ENCODE measurements at regions of chr1 and their contacts with region 1.

Region 1: DNA sequence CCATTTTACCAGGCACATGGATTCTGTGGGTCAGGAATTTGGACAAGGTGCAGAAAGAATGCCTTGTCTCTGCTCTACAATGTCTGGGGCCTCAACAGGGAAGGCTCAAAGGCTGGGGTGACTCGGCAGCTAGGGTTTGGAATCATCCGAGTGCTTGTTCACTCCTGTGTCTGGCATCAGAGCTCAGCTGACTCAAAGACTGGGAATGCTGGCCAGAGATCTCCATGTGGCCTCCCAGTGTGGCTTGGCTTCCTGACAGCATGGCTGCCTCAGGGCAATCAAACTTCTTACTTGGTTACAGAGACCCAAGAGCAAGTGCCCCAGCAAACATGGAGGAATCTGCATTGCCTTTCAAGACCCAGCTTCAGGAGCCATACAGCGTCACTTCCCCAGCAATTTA is 110.5 kb downstream of the TOMM20 start:
- DNase-seq: no peak
- ATAC-seq: no peak
- H3K4me3 ChIP-seq: no peak overlapping the region
- H3K27ac ChIP-seq: peak overlapping the region; percentile 24; the same call in 1 of the 2 replicates
- H3K4me1 ChIP-seq: peaks cover 63% of the 10 kb centered on the region
- H3K27me3 ChIP-seq: no peaks in the 10 kb centered on the region
- CTCF ChIP-seq: no peak
- EP300 ChIP-seq: no peak
- POLR2A ChIP-seq: no peak
- RAD21 ChIP-seq: no peak

Region 2: DNA sequence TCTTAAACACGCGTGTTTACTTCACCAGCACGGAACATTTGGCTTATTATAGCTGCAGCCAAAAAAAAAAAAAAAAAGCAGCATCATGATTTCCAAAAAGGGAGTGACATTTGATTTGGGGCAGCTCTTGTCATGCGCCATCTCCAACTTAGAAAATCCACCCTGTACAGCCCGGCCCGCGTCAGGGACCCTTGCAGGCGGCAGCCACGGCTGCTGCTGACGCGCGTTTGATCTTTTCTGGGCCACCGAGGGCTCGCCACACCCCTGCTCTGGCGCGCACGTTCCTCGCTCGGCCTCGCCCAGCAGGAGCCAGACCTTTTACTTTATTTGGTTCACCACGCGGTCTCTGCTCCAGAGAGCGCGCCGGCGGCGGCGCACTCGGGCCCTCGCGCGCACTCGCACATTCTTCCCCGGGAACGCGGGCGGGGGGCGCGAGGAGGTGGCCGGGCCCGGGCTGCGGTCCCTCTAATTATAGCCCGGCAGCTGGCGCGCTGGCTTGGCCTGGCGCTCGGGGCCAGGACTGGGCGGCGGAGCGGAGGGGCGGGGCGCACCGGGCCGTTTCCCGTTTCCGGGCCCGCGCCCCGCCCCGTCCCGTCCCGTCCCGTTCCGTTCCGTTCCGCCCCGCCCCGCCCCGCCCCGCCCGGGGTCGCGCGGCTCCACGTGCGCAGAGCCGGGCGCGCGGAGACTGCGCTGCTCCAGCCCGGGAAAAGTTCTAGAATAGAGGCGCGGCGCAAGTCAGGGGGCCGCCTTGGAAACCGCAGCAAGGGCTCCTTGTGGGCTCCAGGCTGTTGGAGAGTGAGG is 418.3 kb before region 1 on chr1:
- CTCF ChIA-PET with region 1: interaction called, 3 read pairs
- POLR2A ChIA-PET with region 1: no interaction called
- RAD21 ChIA-PET with region 1: interaction called, 21 read pairs
- SMC1A ChIA-PET with region 1: interaction called, 6 read pairs
- in situ Hi-C with region 1: no loop called
- intact Hi-C with region 1: no loop called
- DNase-seq: no peak
- ATAC-seq: peak; percentile 76
- H3K4me3 ChIP-seq: peak overlapping the region; percentile 67; the same call in 1 of the 2 replicates
- H3K27ac ChIP-seq: peak overlapping the region; percentile 75
- H3K4me1 ChIP-seq: peaks cover 22% of the 10 kb centered on the region
- H3K27me3 ChIP-seq: no peaks in the 10 kb centered on the region
- CTCF ChIP-seq: 0 out of 6 replicates have a peak, but pooled peaks of 1 of the 3 experiments have one; percentile 5
- EP300 ChIP-seq: 0 out of 4 replicates have a peak, but pooled peaks of 1 of the 2 experiments have one; percentile 42
- POLR2A ChIP-seq: peak; percentile 70; the same call in 1 of the 2 replicates
- RAD21 ChIP-seq: no peak

Region 3: GRCh38 chr1:234970731-234971476 is 47.3 kb before region 1 on chr1:
- CTCF ChIA-PET with region 1: interaction called, 3 read pairs
- POLR2A ChIA-PET with region 1: interaction called, 7 read pairs
- RAD21 ChIA-PET with region 1: interaction called, 257 read pairs
- SMC1A ChIA-PET with region 1: interaction called, 229 read pairs
- in situ Hi-C with region 1: loop called (anchors 5 kb)
- intact Hi-C with region 1: no loop called
- DNase-seq: no peak
- ATAC-seq: peak; percentile 72
- H3K4me3 ChIP-seq: no peak overlapping the region
- H3K27ac ChIP-seq: peak overlapping the region; percentile 95
- H3K4me1 ChIP-seq: peaks cover 60% of the 10 kb centered on the region
- H3K27me3 ChIP-seq: no peaks in the 10 kb centered on the region
- CTCF ChIP-seq: no peak
- EP300 ChIP-seq: peak in 1 of 2 experiments; percentile 87; a peak in 2 of 4 replicates
- POLR2A ChIP-seq: peak; percentile 31; the same call in 1 of the 2 replicates
- RAD21 ChIP-seq: 0 out of 2 replicates have a peak, but pooled peaks have one; percentile 4

Region 4: DNA sequence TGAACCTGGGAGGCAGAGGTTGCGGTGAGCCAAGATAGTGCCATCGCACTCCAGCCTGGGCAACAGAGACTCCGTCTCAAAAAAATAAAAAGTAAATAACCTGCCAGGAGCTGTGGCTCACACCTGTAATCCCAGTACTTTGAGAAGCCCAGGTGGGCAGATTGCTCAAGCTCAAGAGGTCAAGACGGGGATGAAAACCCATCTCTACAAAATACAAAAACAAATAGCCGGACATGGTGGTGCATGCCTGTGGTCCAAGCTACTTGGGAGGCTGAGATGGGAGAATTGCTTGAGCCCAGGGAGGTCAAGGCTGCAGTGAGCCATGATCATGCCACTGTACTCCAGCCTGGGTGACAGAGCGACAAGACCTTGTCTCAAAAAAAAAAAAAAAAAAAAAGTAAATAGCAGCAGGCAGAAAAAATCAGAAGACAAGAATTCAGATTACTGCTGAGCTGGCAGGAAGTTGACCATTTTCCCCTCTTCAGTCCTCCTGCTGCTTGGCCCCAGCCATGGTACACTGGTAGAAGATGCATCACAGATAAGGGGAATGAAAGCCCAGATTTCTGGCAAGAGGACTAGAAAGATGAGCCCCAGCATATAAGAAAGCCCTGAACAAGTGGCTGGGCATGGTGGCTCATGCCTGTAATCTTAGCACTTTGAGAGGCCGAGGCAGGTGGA is 12.9 kb after region 1 on chr1:
- CTCF ChIA-PET with region 1: interaction called, 6 read pairs
- POLR2A ChIA-PET with region 1: interaction called, 10 read pairs
- RAD21 ChIA-PET with region 1: interaction called, 5 read pairs
- SMC1A ChIA-PET with region 1: interaction called, 125 read pairs
- in situ Hi-C with region 1: no loop called
- intact Hi-C with region 1: no loop called
- DNase-seq: no peak
- ATAC-seq: no peak
- H3K4me3 ChIP-seq: no peak overlapping the region
- H3K27ac ChIP-seq: no peak overlapping the region
- H3K4me1 ChIP-seq: peaks cover 15% of the 10 kb centered on the region
- H3K27me3 ChIP-seq: no peaks in the 10 kb centered on the region
- CTCF ChIP-seq: no peak
- EP300 ChIP-seq: no peak
- POLR2A ChIP-seq: no peak
- RAD21 ChIP-seq: no peak

Region 5: DNA sequence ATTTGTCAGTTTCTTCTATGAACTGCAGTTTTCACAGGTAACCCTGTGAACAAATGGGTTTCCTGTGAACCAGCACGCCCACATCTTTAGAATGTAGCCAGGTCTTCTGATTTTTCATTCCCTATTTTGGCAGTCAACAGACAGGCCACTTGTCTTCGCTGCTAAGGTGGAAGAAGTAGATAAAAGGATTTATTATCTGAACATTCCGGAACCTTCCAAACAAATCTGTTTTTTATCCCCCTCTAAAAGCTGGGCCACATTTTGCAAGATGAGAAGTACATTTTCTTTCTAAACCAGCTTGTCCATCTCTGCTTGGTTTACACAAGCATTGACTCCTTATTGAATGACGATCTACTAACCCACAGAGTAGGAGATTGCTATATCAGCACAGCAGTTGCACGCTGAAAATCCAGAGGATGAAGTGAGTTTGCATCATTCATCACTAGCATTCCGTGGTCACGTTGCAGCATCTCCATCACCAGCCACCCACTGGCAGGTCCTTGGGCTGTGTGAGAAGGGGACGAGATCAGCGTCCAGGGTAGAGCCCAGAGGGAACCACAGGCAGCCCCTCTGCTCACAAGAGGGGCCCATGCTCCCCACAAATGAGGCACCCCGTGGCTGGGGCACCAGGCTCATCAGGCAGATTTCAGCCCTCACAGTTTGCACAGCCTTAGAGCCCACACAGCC is 27.0 kb after region 1 on chr1:
- CTCF ChIA-PET with region 1: interaction called, 12 read pairs
- POLR2A ChIA-PET with region 1: interaction called, 17 read pairs
- RAD21 ChIA-PET with region 1: interaction called, 49 read pairs
- SMC1A ChIA-PET with region 1: interaction called, 125 read pairs
- in situ Hi-C with region 1: no loop called
- intact Hi-C with region 1: loop called (anchors 1 kb)
- DNase-seq: no peak
- ATAC-seq: no peak
- H3K4me3 ChIP-seq: no peak overlapping the region
- H3K27ac ChIP-seq: peak overlapping the region; percentile 40; the same call in 1 of the 2 replicates
- H3K4me1 ChIP-seq: peaks cover 42% of the 10 kb centered on the region
- H3K27me3 ChIP-seq: no peaks in the 10 kb centered on the region
- CTCF ChIP-seq: no peak
- EP300 ChIP-seq: no peak
- POLR2A ChIP-seq: no peak
- RAD21 ChIP-seq: no peak

Region 6: GRCh38 chr1:235050911-235051360 is 32.8 kb after region 1 on chr1:
- CTCF ChIA-PET with region 1: interaction called, 12 read pairs
- POLR2A ChIA-PET with region 1: interaction called, 17 read pairs
- RAD21 ChIA-PET with region 1: interaction called, 49 read pairs
- SMC1A ChIA-PET with region 1: interaction called, 90 read pairs
- in situ Hi-C with region 1: no loop called
- intact Hi-C with region 1: loop called (anchors 1 kb)
- DNase-seq: no peak
- ATAC-seq: peak; percentile 78
- H3K4me3 ChIP-seq: no peak overlapping the region
- H3K27ac ChIP-seq: no peak overlapping the region
- H3K4me1 ChIP-seq: peaks cover 49% of the 10 kb centered on the region
- H3K27me3 ChIP-seq: no peaks in the 10 kb centered on the region
- CTCF ChIP-seq: no peak
- EP300 ChIP-seq: no peak
- POLR2A ChIP-seq: no peak
- RAD21 ChIP-seq: no peak

Region 7: GRCh38 chr1:235147269-235147668 is 129.1 kb after region 1 on chr1:
- CTCF ChIA-PET with region 1: no interaction called
- POLR2A ChIA-PET with region 1: no interaction called
- RAD21 ChIA-PET with region 1: no interaction called
- SMC1A ChIA-PET with region 1: no interaction called
- in situ Hi-C with region 1: no loop called
- intact Hi-C with region 1: no loop called
- DNase-seq: no peak
- ATAC-seq: peak; percentile 74
- H3K4me3 ChIP-seq: no peak overlapping the region
- H3K27ac ChIP-seq: peak overlapping the region; percentile 62; the same call in 1 of the 2 replicates
- H3K4me1 ChIP-seq: peaks cover 18% of the 10 kb centered on the region
- H3K27me3 ChIP-seq: no peaks in the 10 kb centered on the region
- CTCF ChIP-seq: no peak
- EP300 ChIP-seq: no peak; a peak in 1 of 4 replicates
- POLR2A ChIP-seq: no peak
- RAD21 ChIP-seq: no peak